GM10248 (cell line): ENCODE measurements at regions of chr2 and their contacts with region 1.

Region 1: GRCh38 chr2:61193670-61194571 is 31.9 kb downstream of the C2orf74 start:
- DNase-seq: no peak
- CTCF ChIP-seq: no peak

Region 2: DNA sequence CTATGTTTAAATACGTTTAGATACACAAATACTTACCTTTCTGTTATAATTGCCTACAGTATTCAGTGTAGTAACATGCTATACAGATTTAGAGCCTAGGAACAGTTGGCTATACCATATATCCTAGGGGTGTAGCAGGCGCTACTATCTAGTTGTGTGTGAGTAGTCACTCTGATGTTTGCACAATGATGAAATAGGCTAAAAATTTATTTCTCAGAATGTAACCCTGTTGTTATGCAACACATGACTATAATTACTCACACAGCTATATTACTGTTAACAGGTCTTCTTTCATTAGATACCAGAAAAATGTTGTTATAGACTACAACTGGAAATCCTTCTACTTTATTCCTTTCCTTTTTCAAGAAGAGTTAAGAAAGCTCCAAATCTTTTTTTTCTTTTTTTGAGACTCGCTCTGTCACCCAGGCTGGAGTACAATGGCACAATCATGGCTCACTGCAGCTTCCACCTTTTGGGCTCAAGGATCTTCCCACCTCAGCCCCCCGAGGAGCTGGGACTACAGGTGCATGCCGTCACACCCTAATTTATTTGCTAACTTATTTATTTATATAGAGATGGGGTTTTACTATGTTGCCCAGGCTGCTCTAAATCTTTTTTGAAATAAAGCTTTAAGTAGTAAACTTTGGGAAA is 16.5 kb after region 1 on chr2:
- CTCF ChIA-PET with region 1: interaction called, 11 read pairs
- POLR2A ChIA-PET with region 1: no interaction called
- DNase-seq: no peak
- CTCF ChIP-seq: no peak

Region 3: DNA sequence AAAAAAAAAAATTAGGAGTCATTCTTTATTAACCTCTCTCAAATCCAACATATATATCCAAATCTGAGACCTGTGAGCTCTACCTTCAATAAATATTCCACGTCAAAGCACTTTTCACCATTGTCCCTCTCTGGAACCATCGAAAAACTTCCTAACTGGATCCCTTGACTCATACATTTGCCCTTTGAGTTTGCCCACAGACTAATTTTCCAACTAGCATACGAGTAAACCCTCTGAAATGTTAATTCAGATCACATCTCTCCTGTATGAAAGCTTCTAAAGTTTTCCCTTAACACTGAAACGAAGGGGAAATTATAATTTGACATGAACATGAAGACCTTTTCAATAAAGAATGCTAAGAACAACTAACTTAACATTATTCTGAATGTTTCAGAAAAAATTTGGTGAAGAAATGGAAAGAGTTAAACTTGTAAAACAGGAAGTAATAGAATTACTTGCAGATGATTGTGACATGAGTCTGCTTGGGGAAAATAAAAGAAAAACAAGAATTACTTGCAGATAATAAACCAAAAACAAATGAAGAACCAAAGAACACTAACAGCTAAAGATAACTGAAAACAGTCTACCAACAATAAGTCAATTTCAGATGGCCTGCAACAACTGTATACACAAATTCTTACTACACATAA is 78.6 kb after region 1 on chr2:
- CTCF ChIA-PET with region 1: no interaction called
- POLR2A ChIA-PET with region 1: no interaction called
- DNase-seq: no peak
- CTCF ChIP-seq: no peak